Gastrocnemius medialis (tissue), 4 donors: ENCODE measurements at regions of chr1 and their contacts with region 1.

Region 1: DNA sequence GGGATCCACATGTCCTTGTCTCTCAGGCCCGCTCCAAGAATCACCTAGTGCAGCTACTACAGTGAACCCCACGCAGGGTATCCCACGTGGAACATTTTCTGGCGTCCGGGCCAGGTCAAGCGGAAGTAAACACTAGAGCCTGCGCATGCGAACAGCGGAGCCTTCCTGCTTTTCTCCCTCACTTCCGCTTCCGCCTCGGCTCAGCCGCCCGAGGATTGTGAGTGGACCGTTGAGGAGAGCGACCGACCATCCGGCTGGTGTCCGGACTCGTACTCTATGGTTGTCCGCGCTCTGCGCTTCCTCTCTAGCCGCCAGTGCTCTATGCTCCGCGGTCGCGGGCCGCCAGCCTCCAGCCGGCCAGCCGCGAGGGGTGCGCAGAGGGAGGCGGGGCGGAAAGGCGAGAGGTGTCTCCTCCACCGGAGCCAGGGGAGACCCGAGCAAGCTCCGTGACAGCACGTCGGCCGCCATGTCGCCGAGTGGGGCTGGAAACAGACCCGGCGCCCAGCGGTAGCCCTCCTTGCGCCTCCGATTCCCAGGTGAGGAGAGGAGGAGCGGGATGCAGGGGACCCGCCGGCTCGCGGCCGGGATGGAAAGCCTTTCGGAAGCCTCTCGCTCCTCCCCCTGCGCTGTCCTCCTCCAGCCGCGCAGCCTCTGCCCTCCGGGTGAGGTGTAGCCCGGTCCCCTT is at the starts of genes CNST and TFB2M:
- DNase-seq: peak; percentile 98
- ATAC-seq: peak; percentile 91
- H3K4me3 ChIP-seq: peak within 1 kb of the TSS; percentile 88 to 100 (median 95)
- H3K27ac ChIP-seq: peak within 1 kb of the TSS; percentile 90 to 99 (median 96)
- H3K4me1 ChIP-seq: peaks cover 46 to 56% of the 10 kb centered on the region in 2 donors
- H3K27me3 ChIP-seq: no peaks in the 10 kb centered on the region
- CTCF ChIP-seq: peak in 1 of 5 experiments; percentile 3
- POLR2A ChIP-seq: peak; percentile 93 to 95
- total RNA-seq, gene CNST: 62.7 to 105 (median 81.5) TPM
- total RNA-seq, gene TFB2M: 18.9 to 33.1 (median 21.2) TPM

Region 2: DNA sequence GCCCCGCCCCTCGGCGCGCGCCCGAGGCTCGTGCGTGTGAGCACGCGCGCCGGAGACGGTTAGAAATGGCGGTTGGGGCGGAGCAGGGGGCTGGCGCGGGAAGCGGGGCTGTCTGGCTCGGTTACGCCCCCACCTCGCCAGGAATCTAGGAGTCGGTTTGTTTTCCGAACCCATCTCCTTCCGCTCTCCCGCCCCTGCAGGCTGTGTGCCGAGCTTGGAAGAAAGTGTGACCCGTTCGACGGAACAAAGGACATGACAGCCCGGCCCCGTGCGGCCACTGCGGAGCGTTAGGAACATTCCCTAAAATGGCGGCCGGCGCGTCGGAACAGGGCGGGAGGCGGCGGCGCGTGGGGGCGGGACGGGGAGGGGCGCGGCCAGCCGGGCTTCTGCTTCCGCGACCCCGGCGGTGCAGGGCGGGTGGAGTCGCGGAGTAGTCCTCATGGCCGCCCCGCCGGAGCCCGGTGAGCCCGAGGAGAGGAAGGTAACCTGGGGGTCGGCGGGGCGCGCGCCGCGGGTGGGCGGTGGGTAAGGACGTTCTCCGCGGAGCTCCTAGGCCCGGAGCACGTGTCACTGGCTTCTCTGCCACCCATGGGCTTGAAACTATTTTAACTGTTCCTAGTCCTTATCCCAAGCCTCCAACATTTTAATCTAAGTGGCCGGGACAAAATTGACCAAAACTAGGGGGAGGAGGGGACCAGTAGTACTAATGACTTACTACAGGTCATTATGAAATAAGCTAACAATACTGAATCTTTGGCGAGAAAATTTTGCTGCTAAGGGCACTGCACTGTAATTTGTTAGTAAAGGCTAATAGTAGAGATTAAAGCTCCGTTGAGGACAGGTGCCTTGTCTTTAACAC is 1730.8 kb before region 1 on chr1 and contains the start of gene COX20:
- in situ Hi-C with region 1: no loop called
- intact Hi-C with region 1: loop called (anchors 10 kb)
- DNase-seq: peak; percentile 74 to 88
- ATAC-seq: peak; percentile 70 to 80
- H3K4me3 ChIP-seq: peak within 1 kb of the TSS; percentile 68 to 81 (median 76)
- H3K27ac ChIP-seq: peak within 1 kb of the TSS; percentile 96 to 99 (median 99)
- H3K4me1 ChIP-seq: peaks cover 11 to 33% of the 10 kb centered on the region in 2 donors
- H3K27me3 ChIP-seq: no peaks in the 10 kb centered on the region
- CTCF ChIP-seq: peak in 1 of 5 experiments; percentile 14
- POLR2A ChIP-seq: peak; percentile 65 to 66
- total RNA-seq, gene COX20: 22.7 to 72.0 (median 35.4) TPM

Region 3: GRCh38 chr1:246608616-246609376 is 42.5 kb after region 1 on chr1:
- in situ Hi-C with region 1: no loop called
- intact Hi-C with region 1: loop called (anchors 2 kb)
- DNase-seq: peak; percentile 67 to 87
- ATAC-seq: peak; percentile 90 to 93
- H3K4me3 ChIP-seq: no peak overlapping the region
- H3K27ac ChIP-seq: peak overlapping the region; percentile 75 to 89 (median 78)
- H3K4me1 ChIP-seq: peaks cover 36 to 60% of the 10 kb centered on the region in 2 donors
- H3K27me3 ChIP-seq: no peaks in the 10 kb centered on the region
- CTCF ChIP-seq: peak in 2 of 5 experiments; percentile 31 to 42
- POLR2A ChIP-seq: peak in 1 of 2 donors; percentile 51

Region 4: DNA sequence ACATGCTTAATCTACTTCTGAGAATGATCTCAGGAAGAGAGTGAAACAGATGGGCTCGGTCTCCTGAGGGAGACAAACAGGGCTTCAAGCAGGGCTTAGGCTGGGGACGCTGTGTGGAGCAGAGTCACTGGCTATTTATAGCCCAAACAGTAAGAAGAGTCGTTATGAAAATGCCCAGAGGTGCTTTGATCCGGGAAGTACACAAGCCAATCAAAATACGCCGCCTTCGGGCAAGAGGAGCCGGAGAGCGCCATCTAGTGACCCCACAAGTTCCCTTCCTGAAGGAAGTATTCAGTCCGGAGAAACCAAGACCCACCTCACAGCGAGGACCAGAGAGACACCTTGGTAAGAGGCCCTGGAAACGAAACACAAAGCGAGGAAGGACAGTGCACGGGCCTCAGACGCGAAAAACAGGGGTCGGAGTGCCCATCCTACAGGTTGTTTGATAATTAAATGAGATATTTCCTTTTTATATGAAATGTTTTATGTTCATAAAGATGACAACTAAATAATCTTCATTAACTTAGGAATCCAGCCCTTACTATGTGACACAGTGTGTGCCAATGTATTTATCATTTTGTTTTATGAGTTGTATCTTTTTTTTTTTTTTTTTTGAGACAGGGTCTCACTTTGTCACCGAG is 132.9 kb after region 1 on chr1:
- in situ Hi-C with region 1: loop called in 2 of 4 experiments (anchors 5 to 10 kb)
- intact Hi-C with region 1: loop called (anchors 1 kb)
- DNase-seq: peak; percentile 90 to 93
- ATAC-seq: peak; percentile 99 to 100
- H3K4me3 ChIP-seq: peak overlapping the region; percentile 17 to 38 (median 34)
- H3K27ac ChIP-seq: peak overlapping the region; percentile 83 to 91 (median 88)
- H3K4me1 ChIP-seq: peaks cover 9 to 13% of the 10 kb centered on the region in 2 donors
- H3K27me3 ChIP-seq: no peaks in the 10 kb centered on the region
- CTCF ChIP-seq: peak; percentile 85 to 92 (median 87)
- POLR2A ChIP-seq: peak; percentile 43 to 53

Region 5: GRCh38 chr1:246931549-246932365 is 365.5 kb after region 1 on chr1 and contains the start of gene AHCTF1:
- in situ Hi-C with region 1: no loop called
- intact Hi-C with region 1: loop called (anchors 5 kb)
- DNase-seq: peak; percentile 94 to 97
- ATAC-seq: peak; percentile 95 to 96
- H3K4me3 ChIP-seq: peak within 1 kb of the TSS; percentile 89 to 100 (median 97)
- H3K27ac ChIP-seq: peak within 1 kb of the TSS; percentile 96 to 100 (median 99)
- H3K4me1 ChIP-seq: peaks cover 30 to 34% of the 10 kb centered on the region in 2 donors
- H3K27me3 ChIP-seq: no peaks in the 10 kb centered on the region
- CTCF ChIP-seq: peak in 1 of 5 experiments; percentile 10
- POLR2A ChIP-seq: peak; percentile 95 to 96
- total RNA-seq, gene AHCTF1: 21.7 to 28.5 (median 24.7) TPM